Naive thymus-derived CD4-positive, alpha-beta T cell (primary cell): ENCODE measurements at regions of chr15 and their contacts with region 1.

Region 1: DNA sequence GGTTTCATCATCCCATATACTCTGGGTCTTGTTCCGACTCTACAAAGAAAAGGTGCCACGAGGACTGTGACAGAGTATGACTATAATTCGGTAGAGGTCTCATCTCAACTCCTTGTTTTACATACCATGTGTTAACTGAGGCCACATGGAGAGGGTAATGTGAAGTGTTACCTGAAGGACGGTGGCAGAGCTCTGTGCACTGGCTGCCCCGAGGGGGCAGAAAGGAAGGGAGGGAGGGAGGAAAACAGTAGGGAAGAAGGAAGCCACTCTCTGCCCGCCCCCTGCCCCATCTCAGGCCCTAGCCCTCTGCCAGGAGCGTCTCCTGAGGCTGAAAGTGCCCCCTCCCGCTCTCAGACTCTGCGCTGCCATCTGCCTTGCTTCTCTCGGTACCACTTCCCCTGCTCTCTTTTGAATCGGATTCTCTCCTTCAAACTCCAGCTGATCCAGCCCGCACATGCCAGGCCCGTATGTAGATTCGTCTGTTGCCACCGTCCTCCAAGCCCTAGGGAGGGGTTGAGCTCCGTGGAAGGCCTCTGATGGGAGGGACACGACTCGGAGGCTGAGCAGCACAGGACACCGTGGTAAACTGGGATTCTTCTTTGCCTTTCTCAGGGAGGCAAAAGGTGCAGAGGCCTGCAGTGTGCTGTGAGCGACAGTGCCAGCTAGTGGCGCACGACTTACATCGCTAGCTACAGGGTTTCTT is 70.5 kb upstream of the ATP10A start:
- DNase-seq: peak; percentile 36 to 77 (median 68)
- ATAC-seq: peak; percentile 97
- H3K4me3 ChIP-seq: peak overlapping the region; percentile 73
- H3K4me3 Mint-ChIP-seq: peak overlapping the region; percentile 78 to 98 (median 90)
- H3K27ac ChIP-seq: no peak overlapping the region
- H3K27ac Mint-ChIP-seq: peak overlapping the region in 7 of 9 donors; percentile 21 to 79 (median 51)
- H3K4me1 ChIP-seq: no peaks in the 10 kb centered on the region
- H3K4me1 Mint-ChIP-seq: peaks cover 0 to 10% (median 8%) of the 10 kb centered on the region in 7 donors
- H3K27me3 ChIP-seq: no peaks in the 10 kb centered on the region
- H3K27me3 Mint-ChIP-seq: peaks cover 0 to 11% (median 5%) of the 10 kb centered on the region in 5 donors

Region 2: DNA sequence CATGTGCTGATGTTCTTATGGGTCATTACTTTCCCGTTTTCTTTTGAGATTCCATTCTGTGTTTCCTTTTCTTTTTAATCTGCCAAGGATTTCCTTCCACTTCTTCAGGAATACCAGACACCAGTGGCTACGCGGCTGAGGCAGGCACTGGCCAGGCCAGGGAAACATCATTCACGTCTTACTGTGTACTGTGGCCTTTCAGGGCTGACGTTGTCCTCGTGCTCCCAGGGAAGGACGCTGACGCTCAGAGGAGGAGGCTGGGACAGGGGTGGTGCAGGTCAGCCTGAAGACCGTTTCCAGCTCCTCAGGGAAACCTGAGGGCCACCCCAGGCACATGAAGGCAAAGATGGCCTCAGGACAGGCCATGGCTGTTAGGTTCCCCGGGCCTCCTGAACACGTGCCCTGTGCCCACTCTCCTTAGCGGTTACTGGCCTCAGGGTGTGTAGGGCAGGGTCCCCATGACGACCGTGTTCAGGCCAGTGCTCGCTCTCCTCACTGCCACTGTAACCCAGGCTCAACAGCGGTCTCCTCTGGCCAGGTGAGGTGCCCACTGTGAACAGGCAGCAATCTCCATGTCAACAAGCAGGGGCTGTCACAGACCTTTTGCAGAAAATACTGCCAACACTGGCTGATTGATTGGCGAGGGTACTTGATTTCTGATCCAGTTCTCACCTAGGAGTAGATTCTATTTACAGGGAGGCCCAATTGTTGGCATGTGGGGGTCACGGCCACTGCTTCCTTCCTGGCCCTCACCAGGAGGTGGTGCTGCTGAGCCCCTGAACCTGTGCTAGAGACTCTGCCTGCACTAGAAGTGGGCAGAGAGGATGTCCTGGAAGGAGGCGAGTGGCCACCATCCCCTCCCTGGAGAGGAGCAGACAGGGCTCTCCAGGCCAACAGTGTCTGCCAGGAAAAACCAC is 240.0 kb before region 1 on chr15:
- CTCF ChIA-PET with region 1: interaction called, 6 read pairs
- POLR2A ChIA-PET with region 1: no interaction called
- intact Hi-C with region 1: loop called (anchors 1 kb)
- DNase-seq: peak in 5 of 9 donors; percentile 10 to 39 (median 21)
- ATAC-seq: peak; percentile 57
- H3K4me3 ChIP-seq: no peak overlapping the region
- H3K4me3 Mint-ChIP-seq: no peak overlapping the region
- H3K27ac ChIP-seq: no peak overlapping the region
- H3K27ac Mint-ChIP-seq: peak overlapping the region in 1 of 9 donors; percentile 40
- H3K4me1 ChIP-seq: no peaks in the 10 kb centered on the region
- H3K4me1 Mint-ChIP-seq: peaks cover 0 to 3% (median 0%) of the 10 kb centered on the region in 7 donors
- H3K27me3 ChIP-seq: no peaks in the 10 kb centered on the region
- H3K27me3 Mint-ChIP-seq: no peaks in the 10 kb centered on the region

Region 3: GRCh38 chr15:25778161-25778560 is 155.4 kb before region 1 on chr15:
- CTCF ChIA-PET with region 1: interaction called, 15 read pairs
- POLR2A ChIA-PET with region 1: no interaction called
- intact Hi-C with region 1: loop called (anchors 1 to 2 kb)
- DNase-seq: no peak
- ATAC-seq: no peak
- H3K4me3 ChIP-seq: no peak overlapping the region
- H3K4me3 Mint-ChIP-seq: peak overlapping the region in 8 of 10 donors; percentile 47 to 81 (median 56)
- H3K27ac ChIP-seq: no peak overlapping the region
- H3K27ac Mint-ChIP-seq: peak overlapping the region in 6 of 9 donors; percentile 45 to 72 (median 64)
- H3K4me1 ChIP-seq: peaks cover 0 to 15% of the 10 kb centered on the region in 2 donors
- H3K4me1 Mint-ChIP-seq: peaks cover 18 to 67% (median 38%) of the 10 kb centered on the region in 7 donors
- H3K27me3 ChIP-seq: no peaks in the 10 kb centered on the region
- H3K27me3 Mint-ChIP-seq: no peaks in the 10 kb centered on the region

Region 4: GRCh38 chr15:25838191-25838870 is 95.3 kb before region 1 on chr15:
- CTCF ChIA-PET with region 1: no interaction called
- POLR2A ChIA-PET with region 1: no interaction called
- intact Hi-C with region 1: no loop called
- DNase-seq: no peak
- ATAC-seq: no peak
- H3K4me3 ChIP-seq: no peak overlapping the region
- H3K4me3 Mint-ChIP-seq: peak overlapping the region in 8 of 10 donors; percentile 8 to 75 (median 40)
- H3K27ac ChIP-seq: no peak overlapping the region
- H3K27ac Mint-ChIP-seq: peak overlapping the region in 4 of 9 donors; percentile 48 to 74 (median 62)
- H3K4me1 ChIP-seq: peaks cover 0 to 14% of the 10 kb centered on the region in 2 donors
- H3K4me1 Mint-ChIP-seq: peaks cover 30 to 90% (median 75%) of the 10 kb centered on the region in 7 donors
- H3K27me3 ChIP-seq: no peaks in the 10 kb centered on the region
- H3K27me3 Mint-ChIP-seq: no peaks in the 10 kb centered on the region

Region 5: DNA sequence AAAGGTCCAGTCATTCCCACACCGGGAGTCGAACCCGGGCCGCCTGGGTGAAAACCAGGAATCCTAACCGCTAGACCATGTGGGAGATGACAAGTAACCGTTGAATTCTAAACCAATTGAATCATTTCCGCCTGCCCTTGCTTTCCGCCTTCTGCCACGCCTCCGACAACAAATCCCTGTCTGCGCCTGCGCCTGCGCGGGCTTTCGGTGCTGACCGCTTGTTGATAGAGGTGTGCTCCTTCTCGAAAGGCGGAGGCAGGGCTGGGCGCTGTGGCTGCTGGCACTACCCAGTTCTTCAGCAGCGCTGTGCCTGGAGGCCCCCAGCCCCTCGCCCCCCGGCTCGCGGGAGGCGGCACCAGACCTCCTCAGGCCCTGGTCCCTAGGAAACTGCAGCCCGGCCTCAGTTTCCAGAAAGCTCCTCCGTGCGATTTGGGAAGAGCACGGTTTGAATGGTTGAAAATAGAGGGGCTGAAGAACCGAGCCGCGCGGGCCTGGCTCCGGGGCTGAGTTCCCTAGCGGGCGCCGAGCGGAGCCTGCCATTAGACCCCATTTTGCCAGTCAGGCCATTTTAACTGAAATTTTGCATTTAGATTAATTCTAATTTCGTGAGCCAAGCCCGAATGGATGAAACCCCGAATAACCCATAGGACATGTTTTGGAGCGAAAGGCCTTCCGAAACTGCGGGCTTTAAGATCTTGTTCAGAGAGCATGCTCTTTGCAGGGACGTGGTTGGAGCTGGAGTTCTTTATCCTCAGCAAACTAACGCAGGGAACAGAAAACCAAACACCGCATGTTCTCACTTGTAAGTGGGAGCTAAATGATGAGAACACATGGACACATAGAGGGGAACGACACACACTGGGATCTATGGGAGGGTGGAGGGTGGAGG is 148.9 kb after region 1 on chr15:
- CTCF ChIA-PET with region 1: no interaction called
- POLR2A ChIA-PET with region 1: no interaction called
- intact Hi-C with region 1: loop called in 1 of 2 experiments (anchors 2 kb)
- DNase-seq: peak; percentile 90 to 97 (median 96)
- ATAC-seq: peak; percentile 97
- H3K4me3 ChIP-seq: peak overlapping the region; percentile 83
- H3K4me3 Mint-ChIP-seq: peak overlapping the region; percentile 84 to 97 (median 92)
- H3K27ac ChIP-seq: peak overlapping the region; percentile 78
- H3K27ac Mint-ChIP-seq: peak overlapping the region; percentile 86 to 100 (median 98)
- H3K4me1 ChIP-seq: peaks cover 0 to 3% of the 10 kb centered on the region in 2 donors
- H3K4me1 Mint-ChIP-seq: peaks cover 13 to 58% (median 43%) of the 10 kb centered on the region in 7 donors
- H3K27me3 ChIP-seq: no peaks in the 10 kb centered on the region
- H3K27me3 Mint-ChIP-seq: peaks cover 0 to 18% (median 0%) of the 10 kb centered on the region in 5 donors

Region 6: DNA sequence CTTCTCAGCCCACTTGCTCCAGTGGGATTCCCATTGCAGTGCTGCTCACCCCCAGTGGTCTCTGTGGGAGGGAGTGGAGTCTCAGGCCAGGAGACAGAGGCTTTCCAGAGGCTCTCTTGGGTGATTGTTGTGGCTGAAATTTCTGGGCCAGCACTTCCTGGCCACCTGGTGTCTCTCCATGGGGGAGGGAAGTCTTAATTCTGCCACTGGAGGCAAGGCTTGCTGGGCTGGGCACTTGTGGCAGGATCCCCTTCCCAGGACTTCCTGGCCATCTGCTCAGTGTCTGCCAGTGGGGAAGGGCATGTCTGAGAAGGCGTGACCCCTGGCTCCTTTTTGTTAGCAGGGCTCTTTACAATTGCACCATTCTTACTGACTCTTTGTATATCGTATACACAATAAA is 487.5 kb after region 1 on chr15:
- CTCF ChIA-PET with region 1: no interaction called
- POLR2A ChIA-PET with region 1: no interaction called
- intact Hi-C with region 1: no loop called
- DNase-seq: no peak
- ATAC-seq: no peak
- H3K4me3 ChIP-seq: no peak overlapping the region
- H3K4me3 Mint-ChIP-seq: no peak overlapping the region
- H3K27ac ChIP-seq: no peak overlapping the region
- H3K27ac Mint-ChIP-seq: no peak overlapping the region
- H3K4me1 ChIP-seq: no peaks in the 10 kb centered on the region
- H3K4me1 Mint-ChIP-seq: no peaks in the 10 kb centered on the region
- H3K27me3 ChIP-seq: no peaks in the 10 kb centered on the region
- H3K27me3 Mint-ChIP-seq: no peaks in the 10 kb centered on the region